Heart left ventricle (tissue), 16 donors: ENCODE measurements at regions of chr17 and their contacts with region 1.

Region 1: DNA sequence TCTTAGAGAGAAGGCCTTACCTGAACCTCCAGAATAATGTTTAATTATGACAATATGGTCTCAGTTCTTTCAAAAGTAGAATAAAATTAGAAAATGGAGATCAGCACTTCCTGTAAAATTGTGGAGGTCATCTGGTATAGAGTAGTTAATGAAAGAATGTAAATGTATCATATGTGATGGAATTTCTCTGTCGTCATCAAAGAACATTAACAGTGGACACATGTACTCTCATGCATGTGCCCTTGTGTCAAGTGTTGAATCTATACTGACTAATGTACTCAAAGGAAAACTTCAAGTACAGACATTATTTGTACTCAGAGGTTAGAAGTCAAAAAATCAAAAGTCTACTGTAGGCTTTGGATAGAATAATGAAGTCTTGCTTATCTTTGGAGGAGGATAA is 129.2 kb upstream of the MYOCD start:
- DNase-seq: no peak
- ATAC-seq: no peak
- H3K4me3 ChIP-seq: no peak overlapping the region
- H3K27ac ChIP-seq: no peak overlapping the region
- H3K4me1 ChIP-seq: no peaks in the 10 kb centered on the region
- H3K27me3 ChIP-seq: no peaks in the 10 kb centered on the region
- CTCF ChIP-seq: no peak
- POLR2A ChIP-seq: no peak

Region 2: GRCh38 chr17:12250973-12251372 is 285.5 kb before region 1 on chr17:
- intact Hi-C with region 1: loop called in 5 of 10 experiments (anchors 5 to 10 kb)
- DNase-seq: no peak
- ATAC-seq: no peak
- H3K4me3 ChIP-seq: no peak overlapping the region
- H3K27ac ChIP-seq: no peak overlapping the region
- H3K4me1 ChIP-seq: peaks cover 0 to 11% (median 0%) of the 10 kb centered on the region in 12 donors
- H3K27me3 ChIP-seq: no peaks in the 10 kb centered on the region
- CTCF ChIP-seq: no peak
- POLR2A ChIP-seq: no peak

Region 3: GRCh38 chr17:12667299-12667958 is 131.0 kb after region 1 on chr17:
- intact Hi-C with region 1: no loop called
- DNase-seq: peak in 4 of 5 donors; percentile 34 to 56 (median 48)
- ATAC-seq: peak; percentile 62 to 81 (median 72)
- H3K4me3 ChIP-seq: peak overlapping the region; percentile 47 to 81 (median 64)
- H3K27ac ChIP-seq: peak overlapping the region; percentile 51 to 91 (median 80)
- H3K4me1 ChIP-seq: peaks cover 0 to 33% (median 5%) of the 10 kb centered on the region in 12 donors
- H3K27me3 ChIP-seq: peaks cover 0 to 37% (median 5%) of the 10 kb centered on the region in 9 donors
- CTCF ChIP-seq: peak in 11 of 12 donors; percentile 7 to 64 (median 45)
- POLR2A ChIP-seq: peak in 1 of 2 donors; percentile 7